Aorta (tissue), 5 donors: ENCODE measurements at regions of chr5 and their contacts with region 1.

Region 1: DNA sequence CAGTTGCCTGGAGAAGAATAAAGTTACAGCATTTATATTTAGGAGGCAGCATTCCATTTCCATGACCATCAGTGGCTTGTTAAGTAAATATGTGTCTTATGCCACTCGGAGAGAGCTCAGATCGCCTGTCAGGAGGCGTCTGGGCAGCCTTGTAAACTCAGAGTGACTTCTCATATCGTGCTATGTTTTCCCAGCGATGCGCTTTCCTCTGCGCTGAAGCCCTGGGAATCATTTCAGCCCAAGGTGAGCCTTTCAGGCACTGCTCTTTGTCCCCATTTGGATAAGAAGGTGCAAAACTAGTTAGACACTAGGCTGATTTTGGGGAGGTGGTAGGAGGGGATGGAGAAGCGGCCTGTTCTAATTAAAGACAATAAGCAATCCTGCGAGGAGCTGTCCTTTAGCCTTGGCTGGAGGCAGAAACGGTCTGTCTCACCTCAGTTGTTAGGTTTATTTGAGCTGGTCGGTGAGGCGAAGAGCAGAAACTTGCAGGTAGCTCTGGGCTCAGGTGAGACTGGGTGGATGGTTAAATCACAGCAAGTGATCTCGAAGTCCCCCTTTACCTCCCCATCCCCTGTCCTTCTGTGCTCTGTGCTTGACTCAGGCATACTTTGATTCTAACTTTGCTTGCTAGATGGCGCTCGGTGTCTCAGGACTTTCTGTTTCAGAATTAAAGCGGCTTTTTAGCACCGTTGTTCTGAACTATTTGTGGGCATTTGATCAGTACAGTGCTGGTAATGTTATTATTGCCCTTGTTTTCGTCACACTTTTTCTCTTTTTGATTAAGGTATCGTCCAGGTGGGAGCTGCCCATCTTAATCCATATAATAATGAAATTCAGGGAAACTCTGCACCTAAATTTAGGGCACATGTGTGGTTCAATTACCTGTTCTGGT is 24.6 kb downstream of the NR2F1 start:
- DNase-seq: no peak
- ATAC-seq: peak; percentile 78
- H3K4me3 ChIP-seq: no peak overlapping the region
- H3K27ac ChIP-seq: no peak overlapping the region
- H3K4me1 ChIP-seq: no peaks in the 10 kb centered on the region
- H3K27me3 ChIP-seq: peaks cover 0 to 3% of the 10 kb centered on the region in 2 donors

Region 2: DNA sequence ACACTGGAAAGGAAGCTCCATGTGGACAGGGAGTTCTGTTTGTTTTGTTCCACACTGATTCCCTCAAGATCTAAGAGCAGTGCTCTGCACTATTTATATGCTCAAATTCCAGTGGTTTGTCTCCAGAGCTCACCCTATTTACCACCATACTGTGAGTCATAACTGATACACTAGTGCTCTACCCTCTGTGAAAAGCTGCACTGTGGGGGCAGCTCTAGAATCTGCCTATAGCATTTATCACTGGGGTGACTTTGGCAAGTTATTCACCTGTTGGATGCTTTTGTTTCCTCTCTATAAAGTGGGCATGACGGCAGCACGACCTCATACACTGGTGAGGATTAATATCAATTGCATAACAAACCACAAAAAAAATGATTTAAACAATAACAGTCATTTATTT is 334.4 kb before region 1 on chr5:
- intact Hi-C with region 1: no loop called
- DNase-seq: no peak
- ATAC-seq: no peak
- H3K4me3 ChIP-seq: no peak overlapping the region
- H3K27ac ChIP-seq: no peak overlapping the region
- H3K4me1 ChIP-seq: no peaks in the 10 kb centered on the region
- H3K27me3 ChIP-seq: no peaks in the 10 kb centered on the region

Region 3: GRCh38 chr5:93899026-93899600 is 291.5 kb after region 1 on chr5:
- intact Hi-C with region 1: loop called in 1 of 2 experiments (anchors 10 kb)
- DNase-seq: no peak
- ATAC-seq: no peak
- H3K4me3 ChIP-seq: no peak overlapping the region
- H3K27ac ChIP-seq: no peak overlapping the region
- H3K4me1 ChIP-seq: no peaks in the 10 kb centered on the region
- H3K27me3 ChIP-seq: no peaks in the 10 kb centered on the region

Region 4: DNA sequence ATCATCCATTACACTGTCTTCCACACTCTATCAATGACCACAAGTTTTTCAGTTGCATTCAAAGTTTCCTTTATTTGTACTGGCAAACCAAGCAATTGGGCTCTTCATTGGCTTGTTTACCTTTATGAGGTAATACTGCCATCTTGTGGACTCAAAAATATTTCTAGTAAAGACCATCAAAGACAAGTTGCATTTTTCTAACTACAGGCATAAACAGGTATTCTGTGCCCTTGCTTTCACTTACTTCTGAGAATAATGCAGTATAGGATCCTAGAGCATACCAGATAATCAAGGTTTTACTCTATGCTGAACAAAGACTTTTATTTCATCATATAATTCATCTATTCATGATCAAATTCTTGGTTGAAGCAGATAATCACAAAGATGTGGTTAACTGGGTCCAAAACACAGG is 307.5 kb after region 1 on chr5:
- intact Hi-C with region 1: loop called in 1 of 2 experiments (anchors 10 kb)
- DNase-seq: no peak
- ATAC-seq: peak; percentile 46
- H3K4me3 ChIP-seq: no peak overlapping the region
- H3K27ac ChIP-seq: no peak overlapping the region
- H3K4me1 ChIP-seq: no peaks in the 10 kb centered on the region
- H3K27me3 ChIP-seq: no peaks in the 10 kb centered on the region

Region 5: DNA sequence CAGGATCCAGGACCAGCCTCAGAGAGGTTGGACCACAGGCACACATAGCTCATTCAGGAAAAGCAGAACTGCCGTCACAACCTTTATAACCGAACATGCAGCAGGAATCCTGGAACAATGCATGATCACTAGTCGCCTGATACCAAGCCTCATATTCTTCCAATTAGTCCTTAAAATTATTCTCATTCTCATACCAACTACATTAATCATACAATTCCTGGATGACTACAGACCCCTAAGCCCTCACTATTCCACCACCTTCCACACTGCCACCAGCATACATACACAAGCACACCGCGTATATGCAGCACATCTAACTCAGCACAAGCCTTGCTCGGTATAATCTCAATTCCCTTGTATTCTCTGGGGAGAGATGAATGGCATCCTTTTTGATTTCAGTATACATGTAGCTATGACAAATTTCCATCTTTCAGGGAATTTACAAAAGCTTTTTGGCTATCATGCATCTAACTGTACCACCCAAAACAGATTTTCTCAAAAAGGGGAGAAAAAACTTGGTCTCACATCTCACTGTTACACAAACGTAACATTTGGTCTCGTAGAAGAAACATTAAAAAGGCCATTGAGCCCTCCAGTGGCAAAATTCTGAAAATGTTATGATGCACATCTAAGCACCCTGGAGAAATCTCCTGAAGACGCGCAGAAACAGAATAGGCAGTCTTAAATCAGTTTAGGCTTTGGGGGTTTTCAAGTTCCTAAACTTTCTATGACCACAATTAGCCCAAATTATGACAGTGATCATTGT is 1631.1 kb after region 1 on chr5:
- intact Hi-C with region 1: no loop called
- DNase-seq: no peak
- ATAC-seq: no peak
- H3K4me3 ChIP-seq: no peak overlapping the region
- H3K27ac ChIP-seq: no peak overlapping the region
- H3K4me1 ChIP-seq: no peaks in the 10 kb centered on the region
- H3K27me3 ChIP-seq: no peaks in the 10 kb centered on the region